ENCODE measurements at regions of chr6 and their contacts with region 1.

Region 1: DNA sequence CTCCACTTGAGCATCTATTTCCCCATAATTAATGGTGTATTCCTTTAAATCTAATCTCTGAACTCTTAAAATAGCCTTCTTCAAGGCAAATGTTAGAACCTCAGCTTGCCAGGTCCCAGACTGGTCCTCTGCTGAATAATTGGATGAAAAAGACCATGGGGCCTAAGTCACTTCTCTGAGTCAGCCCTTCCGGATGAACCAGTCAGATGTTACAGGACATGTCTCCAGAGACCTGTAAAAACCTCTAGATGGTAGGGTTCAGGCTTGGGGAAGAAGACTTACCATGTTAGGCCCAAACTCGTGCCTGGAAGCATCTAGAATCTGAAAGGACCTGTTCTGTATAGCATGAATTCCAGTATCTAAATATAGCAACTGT is 97.3 kb downstream of the CDKAL1 start:
- DNase-seq: no peak
- H3K4me3 ChIP-seq: no peak overlapping the region
- H3K27me3 ChIP-seq: no peaks in the 10 kb centered on the region
- CTCF ChIP-seq: no peak

Region 2: GRCh38 chr6:20647585-20647984 is 16.0 kb after region 1 on chr6:
- CTCF ChIA-PET with region 1: interaction called, 4 read pairs
- POLR2A ChIA-PET with region 1: interaction called, 11 read pairs
- DNase-seq: no peak
- H3K4me3 ChIP-seq: no peak overlapping the region
- H3K27me3 ChIP-seq: no peaks in the 10 kb centered on the region
- CTCF ChIP-seq: no peak

Measured in BJ (cell line).